Mammary epithelial cell (primary cell): ENCODE measurements at regions of chr18 and their contacts with region 1.

Region 1: GRCh38 chr18:2147476-2148230 is 423.7 kb downstream of the METTL4 start:
- DNase-seq: peak; percentile 95
- H3K4me3 ChIP-seq: no peak overlapping the region
- H3K27ac ChIP-seq: no peak overlapping the region
- H3K4me1 ChIP-seq: peaks cover 19% of the 10 kb centered on the region
- H3K27me3 ChIP-seq: no peaks in the 10 kb centered on the region
- CTCF ChIP-seq: no peak

Region 2: GRCh38 chr18:1954583-1955312 is 192.9 kb before region 1 on chr18:
- CTCF ChIA-PET with region 1: no interaction called
- dilution Hi-C with region 1: no loop called
- in situ Hi-C with region 1: no loop called
- intact Hi-C with region 1: no loop called
- DNase-seq: no peak
- H3K4me3 ChIP-seq: no peak overlapping the region
- H3K27ac ChIP-seq: no peak overlapping the region
- H3K4me1 ChIP-seq: no peaks in the 10 kb centered on the region
- H3K27me3 ChIP-seq: no peaks in the 10 kb centered on the region
- CTCF ChIP-seq: no peak

Region 3: GRCh38 chr18:2112435-2113045 is 35.1 kb before region 1 on chr18:
- CTCF ChIA-PET with region 1: no interaction called
- dilution Hi-C with region 1: no loop called
- in situ Hi-C with region 1: no loop called
- intact Hi-C with region 1: loop called (anchors 2 kb)
- DNase-seq: peak; percentile 63
- H3K4me3 ChIP-seq: peak overlapping the region in 2 of 3 experiments; percentile 21 to 31
- H3K27ac ChIP-seq: peak overlapping the region; percentile 58
- H3K4me1 ChIP-seq: peaks cover 27% of the 10 kb centered on the region
- H3K27me3 ChIP-seq: no peaks in the 10 kb centered on the region
- CTCF ChIP-seq: no peak

Region 4: DNA sequence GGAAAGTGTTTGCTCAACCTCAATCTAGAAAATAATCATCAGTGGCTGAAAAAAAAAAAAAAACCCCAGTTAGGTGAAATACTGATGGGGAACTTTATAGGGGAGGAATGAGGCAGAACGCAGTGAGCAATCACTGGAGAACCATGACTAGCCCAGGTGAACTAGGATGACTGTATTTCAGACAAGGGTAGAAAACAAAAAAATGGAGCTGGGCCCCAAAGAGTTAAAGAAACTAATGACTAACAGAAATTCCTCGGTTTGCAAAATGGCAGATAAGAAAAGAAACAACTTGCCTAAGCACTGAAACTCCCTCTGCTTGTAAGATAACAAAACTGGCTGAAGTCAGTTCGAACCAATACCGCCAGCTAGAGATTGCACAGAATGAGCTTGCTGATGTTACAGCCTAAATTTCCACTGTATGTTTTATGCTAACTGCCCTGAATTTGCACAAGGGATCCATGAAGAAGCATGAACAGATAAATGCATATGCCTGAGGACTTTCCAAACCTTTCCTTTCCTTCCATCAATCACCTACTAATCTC is 177.7 kb after region 1 on chr18:
- CTCF ChIA-PET with region 1: interaction called, 15 read pairs
- dilution Hi-C with region 1: no loop called
- in situ Hi-C with region 1: no loop called
- intact Hi-C with region 1: no loop called
- DNase-seq: peak; percentile 88
- H3K4me3 ChIP-seq: no peak overlapping the region
- H3K27ac ChIP-seq: peak overlapping the region; percentile 21
- H3K4me1 ChIP-seq: peaks cover 9% of the 10 kb centered on the region
- H3K27me3 ChIP-seq: no peaks in the 10 kb centered on the region
- CTCF ChIP-seq: no peak